ENCODE measurements at regions of chr11 and their contacts with region 1.

Region 1: GRCh38 chr11:114036156-114036811 is 23.2 kb upstream of the ZBTB16 start:
- DNase-seq: peak; percentile 37
- ATAC-seq: peak; percentile 86
- H3K4me3 Mint-ChIP-seq: no peak overlapping the region
- H3K27ac Mint-ChIP-seq: no peak overlapping the region
- H3K4me1 Mint-ChIP-seq: peaks cover 3% of the 10 kb centered on the region
- H3K27me3 Mint-ChIP-seq: peaks cover 15% of the 10 kb centered on the region
- CTCF ChIP-seq: no peak

Region 2: GRCh38 chr11:114197799-114198500 is 161.7 kb after region 1 on chr11:
- CTCF ChIA-PET with region 1: no interaction called
- POLR2A ChIA-PET with region 1: no interaction called
- intact Hi-C with region 1: loop called (anchors 1 kb)
- DNase-seq: no peak
- ATAC-seq: no peak
- H3K4me3 Mint-ChIP-seq: no peak overlapping the region
- H3K27ac Mint-ChIP-seq: no peak overlapping the region
- H3K4me1 Mint-ChIP-seq: peaks cover 45% of the 10 kb centered on the region
- H3K27me3 Mint-ChIP-seq: no peaks in the 10 kb centered on the region
- CTCF ChIP-seq: no peak